ENCODE measurements at regions of chr20 and their contacts with region 1.

Region 1: GRCh38 chr20:64156136-64156885 is 7.9 kb upstream of the MYT1 start:
- DNase-seq: peak; percentile 63
- H3K4me3 ChIP-seq: no peak overlapping the region
- H3K27ac ChIP-seq: peak overlapping the region in 1 of 2 experiments; percentile 92; a peak in 2 of 4 replicates
- H3K4me1 ChIP-seq: peaks cover 0 to 64% of the 10 kb centered on the region in 2 experiments; a peak in 1 of 4 replicates
- H3K27me3 ChIP-seq: no peaks in the 10 kb centered on the region
- CTCF ChIP-seq: no peak
- EP300 ChIP-seq: no peak
- RAD21 ChIP-seq: no peak

Region 2: GRCh38 chr20:64166721-64167615 is 10.7 kb after region 1 on chr20:
- CTCF ChIA-PET with region 1: interaction called, 14 read pairs
- POLR2A ChIA-PET with region 1: interaction called, 13 read pairs
- DNase-seq: peak; percentile 64
- H3K4me3 ChIP-seq: peak overlapping the region in 1 of 2 experiments; percentile 49; a peak in 1 of 4 replicates
- H3K27ac ChIP-seq: peak overlapping the region in 1 of 2 experiments; percentile 97; a peak in 2 of 4 replicates
- H3K4me1 ChIP-seq: peaks cover 0 to 50% of the 10 kb centered on the region in 2 experiments; a peak in 2 of 4 replicates
- H3K27me3 ChIP-seq: peaks cover 38% of the 10 kb centered on the region
- CTCF ChIP-seq: no peak
- EP300 ChIP-seq: no peak
- RAD21 ChIP-seq: no peak

Region 3: DNA sequence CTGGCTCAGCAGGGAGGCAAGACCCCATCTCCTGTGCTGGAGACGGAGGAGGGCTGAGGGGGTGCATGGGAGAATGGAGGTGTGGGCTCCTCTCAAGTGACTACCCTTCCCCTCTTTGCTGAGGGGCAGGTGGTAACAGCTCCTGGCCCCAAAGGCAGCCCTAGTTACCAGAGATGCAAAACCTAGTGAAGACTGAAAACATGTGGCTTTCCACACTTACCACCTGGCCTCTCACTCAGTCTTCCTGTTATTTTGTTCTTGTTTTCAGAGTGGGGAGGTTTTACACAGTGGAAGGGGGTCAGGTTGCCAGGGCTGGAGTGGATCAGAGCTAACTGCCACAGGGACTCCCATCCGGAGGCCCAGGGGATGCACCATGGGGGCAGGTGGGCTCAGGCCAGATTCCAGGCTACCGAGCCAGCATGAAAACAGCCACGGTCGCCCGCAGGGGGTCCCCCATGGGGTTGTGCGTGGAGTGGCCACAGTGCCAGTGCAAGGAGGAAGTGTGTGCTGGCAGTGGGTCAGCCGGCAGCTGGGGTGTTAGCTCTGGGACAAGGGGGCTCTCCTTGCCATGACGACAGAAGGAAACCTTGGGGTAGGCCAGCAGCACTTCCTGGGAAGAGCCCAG is 29.1 kb after region 1 on chr20:
- CTCF ChIA-PET with region 1: no interaction called
- POLR2A ChIA-PET with region 1: no interaction called
- DNase-seq: no peak
- H3K4me3 ChIP-seq: no peak overlapping the region
- H3K27ac ChIP-seq: no peak overlapping the region
- H3K4me1 ChIP-seq: peaks cover 0 to 14% of the 10 kb centered on the region in 2 experiments; a peak in 1 of 4 replicates
- H3K27me3 ChIP-seq: no peaks in the 10 kb centered on the region
- CTCF ChIP-seq: no peak
- EP300 ChIP-seq: no peak
- RAD21 ChIP-seq: no peak